ENCODE measurements at regions of chr4 and their contacts with region 1.

Region 1: DNA sequence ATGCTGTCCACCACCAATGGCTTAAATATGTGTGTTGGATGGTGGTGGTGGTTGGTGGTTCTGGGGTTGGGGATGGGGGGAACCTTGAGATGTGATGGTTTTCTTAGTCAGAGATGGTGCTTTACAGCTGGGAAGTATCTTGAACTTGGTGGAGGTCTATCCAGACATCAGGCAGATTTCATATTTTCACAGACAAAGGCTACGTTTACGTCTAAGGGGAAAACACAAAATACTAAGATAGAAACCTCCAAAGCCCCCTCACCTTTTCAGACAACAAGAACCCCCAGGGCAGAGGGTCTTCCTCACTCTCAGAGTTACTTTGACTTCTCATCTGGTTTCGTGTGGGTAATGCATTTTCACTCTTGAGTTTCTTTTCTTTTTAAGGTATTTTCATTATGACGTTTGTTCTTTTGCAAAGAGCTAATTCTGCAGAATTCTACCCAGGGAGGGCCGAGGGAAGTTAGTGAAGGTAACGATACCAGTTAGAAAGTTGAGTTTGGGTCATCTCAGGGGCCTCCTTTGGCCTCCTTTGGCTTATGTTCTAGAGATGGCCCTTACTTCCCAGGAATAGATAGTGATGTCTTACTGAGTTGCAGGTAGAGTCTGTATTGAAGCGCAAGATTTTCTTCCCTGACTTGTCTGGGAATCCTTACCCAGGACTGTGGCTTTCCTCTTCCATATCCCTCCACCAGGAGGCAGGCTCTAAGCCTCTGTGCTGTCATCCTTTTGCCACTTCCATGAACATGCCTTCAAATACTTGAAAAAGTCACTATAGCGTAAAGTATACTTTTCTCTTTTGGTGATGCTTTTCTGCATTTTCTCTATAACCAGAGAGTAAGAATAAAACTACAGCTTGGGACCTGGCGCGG is 31.9 kb downstream of the RHOH start:
- DNase-seq: no peak
- H3K4me3 ChIP-seq: peak overlapping the region in 1 of 2 donors; percentile 33
- H3K4me3 Mint-ChIP-seq: peak overlapping the region; percentile 69 to 93 (median 77)
- H3K27ac ChIP-seq: peak overlapping the region; percentile 72
- H3K27ac Mint-ChIP-seq: peak overlapping the region; percentile 92 to 100 (median 93)
- H3K4me1 ChIP-seq: peaks cover 100% of the 10 kb centered on the region
- H3K4me1 Mint-ChIP-seq: peaks cover 68 to 98% (median 84%) of the 10 kb centered on the region in 4 donors
- H3K27me3 ChIP-seq: no peaks in the 10 kb centered on the region
- H3K27me3 Mint-ChIP-seq: no peaks in the 10 kb centered on the region

Region 2: DNA sequence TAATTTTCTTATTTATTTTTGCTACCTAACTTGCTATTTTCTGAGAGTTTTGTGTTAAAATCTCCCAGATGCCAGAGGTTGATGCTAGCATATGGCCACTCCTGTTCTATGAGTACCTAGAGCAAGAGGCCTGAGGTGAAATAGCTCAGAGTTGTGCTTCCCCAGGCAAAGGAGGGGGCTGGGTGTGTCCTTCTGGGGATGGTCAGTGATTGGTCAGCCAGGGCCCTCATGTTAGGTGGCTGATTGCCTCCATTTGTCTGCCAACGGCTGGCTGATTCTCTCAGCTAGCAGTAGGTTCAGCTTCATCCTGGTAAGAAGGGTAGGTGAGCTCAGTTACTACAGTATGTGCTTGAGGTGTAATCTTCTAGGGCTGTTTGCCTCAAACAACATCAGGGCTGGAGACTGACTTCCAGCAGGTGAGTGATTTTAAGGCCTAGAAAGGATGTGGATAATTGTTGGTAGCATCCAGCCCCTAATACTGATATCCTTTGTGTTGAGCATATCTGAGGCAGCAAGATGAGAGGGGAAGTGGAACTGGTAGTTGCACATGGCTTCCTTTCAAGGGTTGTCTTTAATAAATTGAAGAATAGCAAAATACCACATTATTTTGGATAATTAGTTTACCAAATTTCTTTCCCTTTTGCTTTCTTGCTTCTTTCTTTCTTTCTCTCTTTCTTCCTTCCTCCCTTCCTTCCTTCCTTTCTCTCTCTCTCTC is 94.4 kb before region 1 on chr4:
- CTCF ChIA-PET with region 1: no interaction called
- POLR2A ChIA-PET with region 1: no interaction called
- intact Hi-C with region 1: no loop called
- DNase-seq: no peak
- H3K4me3 ChIP-seq: no peak overlapping the region
- H3K4me3 Mint-ChIP-seq: no peak overlapping the region
- H3K27ac ChIP-seq: no peak overlapping the region
- H3K27ac Mint-ChIP-seq: no peak overlapping the region
- H3K4me1 ChIP-seq: no peaks in the 10 kb centered on the region
- H3K4me1 Mint-ChIP-seq: peaks cover 0 to 11% (median 10%) of the 10 kb centered on the region in 4 donors
- H3K27me3 ChIP-seq: no peaks in the 10 kb centered on the region
- H3K27me3 Mint-ChIP-seq: no peaks in the 10 kb centered on the region

Region 3: DNA sequence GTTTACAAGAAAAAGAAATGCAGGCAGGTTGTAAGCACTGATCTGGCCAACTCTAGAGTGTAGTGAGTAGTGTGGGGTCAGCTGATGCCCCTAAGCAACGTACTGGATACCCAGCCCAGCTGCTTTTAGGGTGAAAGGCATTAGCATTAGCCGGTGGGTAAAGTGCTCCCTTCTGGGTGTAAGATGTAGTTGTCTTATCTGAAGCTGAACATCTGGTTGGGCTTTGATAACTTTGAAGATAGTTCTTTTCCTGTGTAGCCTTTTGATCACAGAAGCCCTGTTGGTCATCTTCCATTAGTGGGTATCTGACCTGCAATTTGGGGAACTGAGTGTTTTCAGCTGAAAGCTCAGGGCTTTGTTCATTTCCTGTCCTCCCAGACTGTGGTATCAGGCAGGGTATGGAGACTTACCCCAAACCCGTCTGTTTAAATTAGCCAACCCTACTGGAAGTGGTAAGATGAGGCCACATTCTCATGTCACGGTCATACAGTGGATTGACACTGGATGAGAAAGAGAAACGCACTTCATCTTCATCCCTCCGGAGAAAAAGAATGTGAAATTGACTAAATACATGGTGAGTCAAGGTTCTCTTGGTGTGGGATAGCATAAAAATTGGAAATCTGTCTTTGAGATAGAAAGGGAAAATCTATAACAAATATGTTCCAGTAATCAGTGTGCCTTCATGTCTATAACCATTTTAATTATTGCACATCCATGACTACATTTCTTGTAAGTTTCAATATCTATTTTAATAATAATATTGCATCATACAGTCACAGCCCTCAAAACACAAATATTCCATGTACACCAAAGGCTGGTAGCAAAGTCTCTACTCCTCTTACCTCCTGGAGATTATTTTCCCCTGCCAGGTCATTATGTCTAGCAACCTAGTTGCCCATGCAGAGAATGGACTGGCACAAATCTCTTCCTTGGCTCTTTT is 23.2 kb before region 1 on chr4:
- CTCF ChIA-PET with region 1: interaction called, 93 read pairs
- POLR2A ChIA-PET with region 1: interaction called, 1,182 read pairs
- intact Hi-C with region 1: loop called (anchors 1 kb)
- DNase-seq: peak in 4 of 5 donors; percentile 44 to 68 (median 49)
- H3K4me3 ChIP-seq: peak overlapping the region; percentile 39 to 67
- H3K4me3 Mint-ChIP-seq: peak overlapping the region; percentile 86 to 100 (median 96)
- H3K27ac ChIP-seq: peak overlapping the region; percentile 99
- H3K27ac Mint-ChIP-seq: peak overlapping the region; percentile 92 to 100 (median 96)
- H3K4me1 ChIP-seq: peaks cover 75% of the 10 kb centered on the region
- H3K4me1 Mint-ChIP-seq: peaks cover 48 to 87% (median 61%) of the 10 kb centered on the region in 4 donors
- H3K27me3 ChIP-seq: no peaks in the 10 kb centered on the region
- H3K27me3 Mint-ChIP-seq: no peaks in the 10 kb centered on the region

Region 4: DNA sequence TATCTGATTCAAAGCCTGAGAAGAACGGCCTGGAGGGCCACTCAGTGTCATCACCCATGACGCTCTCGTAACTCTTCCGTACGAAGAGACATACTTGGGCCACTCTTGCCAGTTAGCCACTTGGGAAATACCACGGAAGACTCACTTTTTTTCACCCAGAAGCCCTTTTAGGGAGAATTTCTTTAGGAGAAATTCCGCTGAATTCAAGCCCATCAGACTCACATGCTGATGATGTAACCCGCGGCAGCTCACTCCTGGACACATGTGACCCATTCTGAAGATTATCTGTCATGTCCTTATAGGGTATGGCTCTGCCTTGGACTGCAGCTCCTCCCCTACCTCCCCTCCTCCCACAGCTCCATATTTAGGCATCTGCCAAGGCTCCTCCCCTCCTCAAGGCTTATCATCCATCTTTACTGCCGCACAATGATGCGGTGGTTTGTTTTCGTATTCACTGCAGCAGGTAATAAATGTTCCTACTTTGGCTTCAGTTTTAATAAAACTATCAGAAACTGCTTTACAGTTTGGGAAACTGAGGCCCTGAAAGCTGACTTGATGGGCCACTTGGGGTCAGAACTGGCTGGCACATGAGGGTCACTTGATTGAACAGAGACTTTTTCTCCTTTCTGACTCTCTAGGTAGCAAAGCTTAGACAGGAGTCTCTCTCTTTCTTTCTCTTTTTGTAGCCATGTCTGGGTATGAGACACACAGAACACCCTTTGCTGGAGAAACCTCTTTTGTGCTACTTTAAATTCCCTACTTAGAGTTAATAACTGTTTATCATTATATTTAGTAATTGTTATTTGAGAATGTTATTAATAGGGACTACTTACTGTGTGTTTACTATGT is 10.2 kb after region 1 on chr4:
- CTCF ChIA-PET with region 1: interaction called, 17 read pairs
- POLR2A ChIA-PET with region 1: interaction called, 29 read pairs
- intact Hi-C with region 1: loop called (anchors 1 kb)
- DNase-seq: peak; percentile 85 to 97 (median 87)
- H3K4me3 ChIP-seq: peak overlapping the region; percentile 48 to 53
- H3K4me3 Mint-ChIP-seq: peak overlapping the region; percentile 73 to 87 (median 80)
- H3K27ac ChIP-seq: peak overlapping the region; percentile 89
- H3K27ac Mint-ChIP-seq: peak overlapping the region; percentile 95 to 100 (median 97)
- H3K4me1 ChIP-seq: peaks cover 98% of the 10 kb centered on the region
- H3K4me1 Mint-ChIP-seq: peaks cover 73 to 96% (median 86%) of the 10 kb centered on the region in 4 donors
- H3K27me3 ChIP-seq: no peaks in the 10 kb centered on the region
- H3K27me3 Mint-ChIP-seq: no peaks in the 10 kb centered on the region

Region 5: DNA sequence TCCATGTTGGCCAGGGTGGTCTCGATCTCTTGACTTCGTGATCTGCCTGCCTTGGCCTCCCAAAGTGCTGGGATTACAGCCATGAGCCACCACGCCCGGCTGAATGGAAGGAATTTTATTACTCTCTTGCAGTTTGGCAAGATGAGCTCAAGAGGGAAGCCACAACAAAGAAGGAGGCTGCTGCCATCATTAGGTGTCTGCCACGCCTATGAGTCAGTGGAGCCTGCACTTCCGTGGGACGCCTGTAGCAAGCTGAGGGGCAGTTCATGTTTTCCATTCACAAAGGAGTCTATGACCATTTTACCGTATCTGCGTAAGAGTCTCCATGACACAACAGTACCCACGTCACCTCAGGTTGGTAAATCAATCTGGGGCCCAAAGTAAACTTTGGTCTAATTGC is 55.2 kb after region 1 on chr4:
- CTCF ChIA-PET with region 1: interaction called, 13 read pairs
- POLR2A ChIA-PET with region 1: interaction called, 13 read pairs
- intact Hi-C with region 1: no loop called
- DNase-seq: peak; percentile 71 to 97 (median 86)
- H3K4me3 ChIP-seq: no peak overlapping the region
- H3K4me3 Mint-ChIP-seq: peak overlapping the region in 7 of 8 donors; percentile 70 to 86 (median 79)
- H3K27ac ChIP-seq: peak overlapping the region; percentile 49
- H3K27ac Mint-ChIP-seq: peak overlapping the region; percentile 92 to 98 (median 96)
- H3K4me1 ChIP-seq: peaks cover 39% of the 10 kb centered on the region
- H3K4me1 Mint-ChIP-seq: peaks cover 34 to 73% (median 55%) of the 10 kb centered on the region in 4 donors
- H3K27me3 ChIP-seq: no peaks in the 10 kb centered on the region
- H3K27me3 Mint-ChIP-seq: peaks cover 0 to 2% of the 10 kb centered on the region in 2 donors

Region 6: DNA sequence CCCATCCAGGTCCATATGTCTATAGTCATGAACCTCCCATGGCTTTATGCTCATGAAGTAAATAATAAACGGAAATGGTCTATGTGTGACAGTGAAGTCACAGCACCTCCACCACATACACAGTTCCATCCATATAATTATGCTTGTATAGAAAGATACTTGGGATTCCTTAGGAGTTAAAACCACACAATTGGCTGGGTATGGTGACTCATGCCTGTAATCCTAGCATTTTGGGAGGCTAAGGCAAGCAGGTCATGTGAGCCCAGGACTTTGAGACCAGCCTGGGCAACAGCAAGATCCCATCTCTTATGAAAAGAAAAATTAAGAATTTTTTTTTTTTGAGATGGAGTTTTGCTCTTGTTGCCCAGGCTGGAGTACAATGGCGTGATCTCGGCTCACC is 456.6 kb after region 1 on chr4:
- CTCF ChIA-PET with region 1: no interaction called
- POLR2A ChIA-PET with region 1: no interaction called
- intact Hi-C with region 1: no loop called
- DNase-seq: no peak
- H3K4me3 ChIP-seq: no peak overlapping the region
- H3K4me3 Mint-ChIP-seq: no peak overlapping the region
- H3K27ac ChIP-seq: no peak overlapping the region
- H3K27ac Mint-ChIP-seq: no peak overlapping the region
- H3K4me1 ChIP-seq: no peaks in the 10 kb centered on the region
- H3K4me1 Mint-ChIP-seq: no peaks in the 10 kb centered on the region
- H3K27me3 ChIP-seq: no peaks in the 10 kb centered on the region
- H3K27me3 Mint-ChIP-seq: no peaks in the 10 kb centered on the region

Measured in CD4-positive, alpha-beta memory T cell (primary cell).